ENCODE measurements at regions of chr15 and their contacts with region 1.

Region 1: GRCh38 chr15:99250494-99251435 is 516 bp upstream of the LRRC28 start:
- DNase-seq: peak; percentile 99
- ATAC-seq: peak; percentile 99
- H3K4me3 Mint-ChIP-seq: peak overlapping the region; percentile 87
- H3K27ac Mint-ChIP-seq: peak overlapping the region; percentile 91
- H3K4me1 Mint-ChIP-seq: peaks cover 24% of the 10 kb centered on the region
- H3K27me3 Mint-ChIP-seq: peaks cover 5% of the 10 kb centered on the region

Region 2: DNA sequence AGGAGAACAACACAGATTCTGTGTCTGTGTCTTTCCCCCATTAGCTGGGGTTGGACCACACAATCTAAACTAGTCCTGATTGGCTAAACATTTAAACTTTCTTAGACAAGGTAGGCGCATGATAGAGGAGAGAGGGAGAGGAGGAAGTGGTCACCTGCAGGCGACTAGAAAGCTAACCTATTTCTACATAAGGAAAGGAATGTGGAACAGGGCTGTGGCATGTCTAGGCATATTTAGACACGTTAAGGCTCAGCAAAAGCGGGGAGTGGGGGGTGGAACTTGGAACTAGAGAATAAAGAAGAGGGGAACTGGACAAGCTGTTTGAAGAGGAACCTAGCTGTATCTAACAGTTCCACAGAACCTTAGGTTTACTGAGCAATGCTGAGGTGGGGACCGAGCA is 13.4 kb after region 1 on chr15:
- CTCF ChIA-PET with region 1: interaction called, 17 read pairs
- POLR2A ChIA-PET with region 1: interaction called, 4 read pairs
- DNase-seq: no peak
- ATAC-seq: peak; percentile 36
- H3K4me3 Mint-ChIP-seq: no peak overlapping the region
- H3K27ac Mint-ChIP-seq: no peak overlapping the region
- H3K4me1 Mint-ChIP-seq: peaks cover 23% of the 10 kb centered on the region
- H3K27me3 Mint-ChIP-seq: no peaks in the 10 kb centered on the region

Measured in activated CD8-positive, alpha-beta T cell treated with anti-CD3 and anti-CD28 coated beads, Interleukin-2, amount 10 ng/mL, durations not matched to agents 7 days and 5 days (primary cell).